Activated naive CD4-positive, alpha-beta T cell treated with anti-CD3 and anti-CD28 coated beads for 36 hours (primary cell): ENCODE measurements at regions of chr18 and their contacts with region 1.

Region 1: GRCh38 chr18:77560341-77560992 is 310.8 kb downstream of the GALR1 start:
- DNase-seq: peak; percentile 18
- H3K4me3 Mint-ChIP-seq: no peak overlapping the region
- H3K27ac Mint-ChIP-seq: no peak overlapping the region
- H3K4me1 Mint-ChIP-seq: peaks cover 6% of the 10 kb centered on the region
- H3K27me3 Mint-ChIP-seq: peaks cover 26% of the 10 kb centered on the region

Region 2: GRCh38 chr18:76803814-76804213 is 756.7 kb before region 1 on chr18:
- CTCF ChIA-PET with region 1: no interaction called
- intact Hi-C with region 1: no loop called
- DNase-seq: peak; percentile 87
- H3K4me3 Mint-ChIP-seq: peak overlapping the region; percentile 15
- H3K27ac Mint-ChIP-seq: no peak overlapping the region
- H3K4me1 Mint-ChIP-seq: peaks cover 9% of the 10 kb centered on the region
- H3K27me3 Mint-ChIP-seq: peaks cover 5% of the 10 kb centered on the region

Region 3: DNA sequence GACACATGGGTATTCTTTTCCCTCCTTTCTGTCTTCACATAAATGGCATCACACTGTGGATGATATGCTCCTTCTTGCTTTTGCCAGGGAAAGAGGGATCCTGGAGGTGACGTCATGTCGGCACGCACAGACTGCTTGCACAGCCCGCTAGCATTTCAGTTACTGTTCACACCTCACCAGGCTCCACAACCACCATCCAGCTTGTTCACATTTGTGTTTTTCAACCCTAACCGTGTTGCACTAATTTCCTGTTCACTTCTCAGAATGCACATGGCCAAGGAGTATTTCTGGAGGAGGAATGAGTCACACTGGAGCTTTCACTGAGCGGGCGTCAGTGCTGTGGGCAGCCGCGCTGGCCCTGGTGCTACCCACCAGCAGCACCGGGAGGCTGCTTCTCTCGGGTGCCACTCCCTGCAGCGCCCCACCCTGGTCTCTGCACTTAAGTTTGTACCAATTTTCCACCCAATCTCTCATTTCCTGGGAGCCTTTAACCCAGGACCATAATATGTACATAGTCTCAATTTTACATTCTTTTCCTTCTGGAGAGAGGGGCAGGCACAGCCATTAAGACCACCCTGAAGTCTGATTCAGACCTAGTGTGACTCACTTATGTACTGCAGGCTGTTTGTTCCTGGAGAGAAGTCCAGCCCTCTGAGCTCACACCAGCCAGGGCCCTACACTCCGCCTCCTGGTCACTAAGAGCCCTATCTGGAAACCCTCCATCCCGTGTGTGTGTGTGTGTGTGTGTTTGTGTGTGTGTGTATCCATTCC is 493.0 kb before region 1 on chr18:
- CTCF ChIA-PET with region 1: no interaction called
- intact Hi-C with region 1: loop called (anchors 5 kb)
- DNase-seq: peak; percentile 77
- H3K4me3 Mint-ChIP-seq: peak overlapping the region; percentile 17
- H3K27ac Mint-ChIP-seq: peak overlapping the region; percentile 92
- H3K4me1 Mint-ChIP-seq: peaks cover 99% of the 10 kb centered on the region
- H3K27me3 Mint-ChIP-seq: no peaks in the 10 kb centered on the region

Region 4: GRCh38 chr18:77495982-77496690 is 64.3 kb before region 1 on chr18:
- CTCF ChIA-PET with region 1: no interaction called
- intact Hi-C with region 1: loop called (anchors 2 kb)
- DNase-seq: no peak
- H3K4me3 Mint-ChIP-seq: no peak overlapping the region
- H3K27ac Mint-ChIP-seq: no peak overlapping the region
- H3K4me1 Mint-ChIP-seq: no peaks in the 10 kb centered on the region
- H3K27me3 Mint-ChIP-seq: peaks cover 12% of the 10 kb centered on the region